Ascending aorta (tissue), 2 donors: ENCODE measurements at regions of chr9 and their contacts with region 1.

Region 1: GRCh38 chr9:33924978-33925797 is 108.2 kb downstream of the UBE2R2 start:
- DNase-seq: no peak
- H3K4me3 ChIP-seq: no peak overlapping the region
- H3K27ac ChIP-seq: peak overlapping the region in 1 of 2 donors; percentile 62
- H3K4me1 ChIP-seq: peaks cover 2% of the 10 kb centered on the region in 2 donors
- H3K27me3 ChIP-seq: no peaks in the 10 kb centered on the region
- CTCF ChIP-seq: peak; percentile 33 to 63 (median 51)

Region 2: DNA sequence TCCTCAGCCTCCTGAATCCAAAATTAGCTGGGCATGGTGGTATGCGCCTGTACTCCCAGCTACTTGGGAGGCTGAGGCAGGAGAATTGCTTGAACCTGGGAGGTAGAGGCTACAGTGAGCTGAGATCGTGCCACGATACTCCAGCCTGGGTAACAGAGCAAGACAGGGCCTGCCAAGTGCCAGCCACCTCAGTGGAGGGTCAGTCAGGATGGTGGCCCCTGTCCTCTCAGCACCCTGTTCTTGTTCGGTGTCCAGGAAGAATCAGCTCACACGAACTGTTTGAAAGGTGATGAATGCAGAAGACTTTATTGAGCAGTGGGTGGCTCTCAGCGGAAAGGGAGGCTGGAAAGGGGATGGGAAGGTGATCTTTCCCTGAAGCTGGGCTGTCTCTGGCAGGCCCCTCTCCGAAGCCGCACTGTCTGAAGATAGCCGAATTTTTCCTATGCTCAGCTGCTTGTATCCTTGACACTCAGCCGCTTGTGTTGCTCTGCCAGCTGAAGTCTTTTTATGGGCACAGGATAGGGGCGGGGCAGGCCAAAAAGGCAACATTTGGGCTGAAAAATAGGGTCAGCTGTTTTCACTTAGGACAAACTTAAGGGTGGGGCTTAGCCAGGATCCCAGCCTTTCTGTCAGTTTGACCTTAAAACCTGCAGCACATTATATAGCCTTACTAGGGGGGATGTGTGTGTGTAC is 57.3 kb before region 1 on chr9:
- intact Hi-C with region 1: loop called (anchors 10 kb)
- DNase-seq: peak; percentile 19 to 71
- H3K4me3 ChIP-seq: peak overlapping the region in 1 of 2 donors; percentile 35
- H3K27ac ChIP-seq: peak overlapping the region; percentile 38 to 53
- H3K4me1 ChIP-seq: peaks cover 3 to 16% of the 10 kb centered on the region in 2 donors
- H3K27me3 ChIP-seq: no peaks in the 10 kb centered on the region
- CTCF ChIP-seq: no peak

Region 3: DNA sequence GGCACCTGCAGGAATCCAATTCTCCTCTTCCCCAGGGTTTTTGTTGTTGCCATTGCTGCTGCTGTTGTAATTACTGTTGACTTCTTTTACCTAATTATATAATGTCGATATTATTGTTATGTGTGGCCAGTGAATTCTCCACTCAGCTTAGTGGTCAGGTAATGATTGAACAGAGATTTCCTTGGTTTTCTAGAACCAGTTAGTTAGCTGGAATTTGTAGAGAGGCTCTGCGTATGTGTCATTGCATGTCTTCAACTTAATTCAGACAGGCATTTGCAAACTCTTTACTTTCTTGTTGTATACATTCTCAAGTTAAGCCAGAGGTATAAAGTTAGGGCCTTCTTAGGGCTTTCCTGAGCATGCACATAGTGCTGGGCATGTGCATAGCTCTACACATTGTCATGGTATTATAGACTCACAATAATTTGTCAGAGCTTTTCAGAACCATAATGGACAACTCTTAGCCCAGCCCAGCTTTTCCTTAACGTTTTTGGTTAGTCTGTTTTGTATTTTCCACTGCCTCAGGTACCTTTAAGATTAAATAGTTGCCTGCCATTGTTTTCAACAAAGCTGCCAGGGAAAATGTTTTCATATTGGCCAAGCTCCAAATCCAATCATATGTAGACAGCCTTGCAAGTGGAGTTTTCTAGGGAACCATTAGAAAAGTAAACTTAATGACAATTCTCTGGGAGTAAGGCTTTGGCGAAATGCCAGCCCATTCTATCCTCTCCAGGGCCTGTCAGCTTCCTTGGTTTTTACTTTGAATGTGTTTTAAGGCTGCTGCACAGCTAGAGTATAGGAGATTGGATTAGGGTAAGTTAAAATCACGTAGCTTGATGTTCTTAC is 40.1 kb before region 1 on chr9:
- intact Hi-C with region 1: loop called (anchors 5 kb)
- DNase-seq: no peak
- H3K4me3 ChIP-seq: no peak overlapping the region
- H3K27ac ChIP-seq: no peak overlapping the region
- H3K4me1 ChIP-seq: peaks cover 0 to 14% of the 10 kb centered on the region in 2 donors
- H3K27me3 ChIP-seq: no peaks in the 10 kb centered on the region
- CTCF ChIP-seq: no peak

Region 4: GRCh38 chr9:34072868-34073590 is 147.8 kb after region 1 on chr9:
- intact Hi-C with region 1: loop called (anchors 5 kb)
- DNase-seq: no peak
- H3K4me3 ChIP-seq: no peak overlapping the region
- H3K27ac ChIP-seq: peak overlapping the region; percentile 20 to 36
- H3K4me1 ChIP-seq: peaks cover 5 to 14% of the 10 kb centered on the region in 2 donors
- H3K27me3 ChIP-seq: no peaks in the 10 kb centered on the region
- CTCF ChIP-seq: no peak